MCF 10A (cell line): ENCODE measurements at regions of chr6 and their contacts with region 1.

Region 1: GRCh38 chr6:127266178-127266891 is at the start of gene RNF146:
- DNase-seq: peak; percentile 81
- H3K4me3 Mint-ChIP-seq: peak within 1 kb of the TSS; percentile 85
- H3K27ac Mint-ChIP-seq: peak within 1 kb of the TSS; percentile 92
- H3K4me1 Mint-ChIP-seq: peaks cover 4% of the 10 kb centered on the region
- H3K27me3 Mint-ChIP-seq: no peaks in the 10 kb centered on the region
- CTCF ChIP-seq: peak; percentile 69
- total RNA-seq, gene RNF146: 42.0 and 42.4 TPM in 2 replicates

Region 2: GRCh38 chr6:126804332-126805064 is 461.8 kb before region 1 on chr6:
- CTCF ChIA-PET with region 1: interaction called, 11 read pairs
- POLR2A ChIA-PET with region 1: no interaction called
- intact Hi-C with region 1: no loop called
- DNase-seq: peak; percentile 62
- H3K4me3 Mint-ChIP-seq: no peak overlapping the region
- H3K27ac Mint-ChIP-seq: no peak overlapping the region
- H3K4me1 Mint-ChIP-seq: no peaks in the 10 kb centered on the region
- H3K27me3 Mint-ChIP-seq: peaks cover 81% of the 10 kb centered on the region
- CTCF ChIP-seq: peak; percentile 73

Region 3: DNA sequence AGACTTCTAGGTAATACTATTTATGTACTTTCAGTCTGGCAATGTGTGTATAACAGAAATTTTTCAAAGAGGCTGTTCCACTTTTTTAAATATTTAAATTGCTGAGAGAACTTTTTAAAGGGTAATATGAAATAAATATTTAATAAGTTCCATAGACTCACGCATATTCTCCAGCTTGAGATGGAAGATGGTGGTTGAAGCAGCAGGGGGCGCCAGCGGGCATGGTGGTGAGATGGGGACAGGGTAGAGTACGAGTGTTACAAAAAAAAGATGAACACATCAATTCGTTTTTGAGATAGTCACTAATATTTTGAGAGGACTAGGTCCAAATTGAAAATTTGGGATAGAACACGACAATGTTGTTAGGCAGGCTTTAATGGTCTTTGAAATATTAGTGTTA is 79.4 kb before region 1 on chr6:
- CTCF ChIA-PET with region 1: interaction called, 4 read pairs
- POLR2A ChIA-PET with region 1: interaction called, 4 read pairs
- intact Hi-C with region 1: loop called (anchors 2 kb)
- DNase-seq: peak; percentile 53
- H3K4me3 Mint-ChIP-seq: no peak overlapping the region
- H3K27ac Mint-ChIP-seq: no peak overlapping the region
- H3K4me1 Mint-ChIP-seq: no peaks in the 10 kb centered on the region
- H3K27me3 Mint-ChIP-seq: peaks cover 55% of the 10 kb centered on the region
- CTCF ChIP-seq: peak; percentile 30

Region 4: GRCh38 chr6:127247114-127248096 is 18.9 kb before region 1 on chr6:
- CTCF ChIA-PET with region 1: interaction called, 20 read pairs
- POLR2A ChIA-PET with region 1: interaction called, 7 read pairs
- intact Hi-C with region 1: no loop called
- DNase-seq: no peak
- H3K4me3 Mint-ChIP-seq: no peak overlapping the region
- H3K27ac Mint-ChIP-seq: no peak overlapping the region
- H3K4me1 Mint-ChIP-seq: no peaks in the 10 kb centered on the region
- H3K27me3 Mint-ChIP-seq: peaks cover 34% of the 10 kb centered on the region
- CTCF ChIP-seq: no peak

Region 5: GRCh38 chr6:127255286-127255685 is 11.0 kb before region 1 on chr6:
- CTCF ChIA-PET with region 1: interaction called, 20 read pairs
- POLR2A ChIA-PET with region 1: interaction called, 4 read pairs
- intact Hi-C with region 1: no loop called
- DNase-seq: no peak
- H3K4me3 Mint-ChIP-seq: no peak overlapping the region
- H3K27ac Mint-ChIP-seq: no peak overlapping the region
- H3K4me1 Mint-ChIP-seq: no peaks in the 10 kb centered on the region
- H3K27me3 Mint-ChIP-seq: peaks cover 9% of the 10 kb centered on the region
- CTCF ChIP-seq: no peak

Region 6: GRCh38 chr6:127342946-127343808 is 76.8 kb after region 1 on chr6 and contains the start of gene ECHDC1:
- CTCF ChIA-PET with region 1: interaction called, 3 read pairs
- POLR2A ChIA-PET with region 1: interaction called, 15 read pairs
- intact Hi-C with region 1: no loop called
- DNase-seq: peak; percentile 70
- H3K4me3 Mint-ChIP-seq: no peak within 1 kb of the TSS
- H3K27ac Mint-ChIP-seq: no peak within 1 kb of the TSS
- H3K4me1 Mint-ChIP-seq: peaks cover 37% of the 10 kb centered on the region
- H3K27me3 Mint-ChIP-seq: no peaks in the 10 kb centered on the region
- CTCF ChIP-seq: no peak
- total RNA-seq, gene ECHDC1: 60.4 and 70.7 TPM in 2 replicates

Region 7: GRCh38 chr6:127484212-127484858 is 218.0 kb after region 1 on chr6:
- CTCF ChIA-PET with region 1: no interaction called
- POLR2A ChIA-PET with region 1: no interaction called
- intact Hi-C with region 1: no loop called
- DNase-seq: peak; percentile 9
- H3K4me3 Mint-ChIP-seq: peak overlapping the region; percentile 34
- H3K27ac Mint-ChIP-seq: peak overlapping the region; percentile 43
- H3K4me1 Mint-ChIP-seq: peaks cover 33% of the 10 kb centered on the region
- H3K27me3 Mint-ChIP-seq: no peaks in the 10 kb centered on the region
- CTCF ChIP-seq: no peak

Region 8: DNA sequence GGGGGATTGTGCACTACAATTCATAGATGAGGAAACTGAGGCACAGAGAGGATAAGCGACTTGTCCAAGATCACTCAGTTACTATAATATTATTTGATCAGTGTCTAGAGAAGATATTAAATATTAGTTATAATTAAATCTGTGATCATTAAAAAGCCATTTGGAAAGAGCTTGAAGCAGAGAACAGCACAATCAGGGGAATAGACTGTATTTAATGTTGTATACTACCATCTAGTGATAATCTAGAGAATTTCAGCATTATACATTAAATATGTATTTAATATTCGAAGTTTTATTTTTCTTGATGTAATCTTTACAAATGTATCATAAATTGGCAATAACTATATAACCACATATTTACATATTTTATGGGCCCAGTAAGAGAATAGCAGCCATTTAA is 272.9 kb after region 1 on chr6:
- CTCF ChIA-PET with region 1: interaction called, 12 read pairs
- POLR2A ChIA-PET with region 1: no interaction called
- intact Hi-C with region 1: no loop called
- DNase-seq: peak; percentile 14
- H3K4me3 Mint-ChIP-seq: no peak overlapping the region
- H3K27ac Mint-ChIP-seq: no peak overlapping the region
- H3K4me1 Mint-ChIP-seq: peaks cover 5% of the 10 kb centered on the region
- H3K27me3 Mint-ChIP-seq: peaks cover 36% of the 10 kb centered on the region
- CTCF ChIP-seq: peak; percentile 27

Region 9: GRCh38 chr6:127570739-127571389 is 304.5 kb after region 1 on chr6:
- CTCF ChIA-PET with region 1: no interaction called
- POLR2A ChIA-PET with region 1: no interaction called
- intact Hi-C with region 1: no loop called
- DNase-seq: peak; percentile 9
- H3K4me3 Mint-ChIP-seq: no peak overlapping the region
- H3K27ac Mint-ChIP-seq: no peak overlapping the region
- H3K4me1 Mint-ChIP-seq: no peaks in the 10 kb centered on the region
- H3K27me3 Mint-ChIP-seq: no peaks in the 10 kb centered on the region
- CTCF ChIP-seq: no peak